HCT116 (cell line): ENCODE measurements at regions of chr6 and their contacts with region 1.

Region 1: GRCh38 chr6:47047479-47048407 is 5.6 kb upstream of the ADGRF1 start:
- DNase-seq: peak; percentile 89
- ATAC-seq: peak; percentile 80
- H3K4me3 ChIP-seq: peak overlapping the region in 1 of 2 experiments; percentile 9; a peak in 1 of 4 replicates
- H3K27ac ChIP-seq: no peak overlapping the region
- H3K4me1 ChIP-seq: peaks cover 29 to 59% of the 10 kb centered on the region in 2 experiments
- H3K27me3 ChIP-seq: no peaks in the 10 kb centered on the region
- CTCF ChIP-seq: peak; percentile 77 to 88 (median 84); a peak in 5 of 6 replicates
- POLR2A ChIP-seq: no peak
- RAD21 ChIP-seq: peak; percentile 95

Region 2: GRCh38 chr6:46338131-46338530 is 709.6 kb before region 1 on chr6:
- CTCF ChIA-PET with region 1: no interaction called
- POLR2A ChIA-PET with region 1: no interaction called
- RAD21 ChIA-PET with region 1: no interaction called
- intact Hi-C with region 1: no loop called
- DNase-seq: no peak
- ATAC-seq: no peak
- H3K4me3 ChIP-seq: no peak overlapping the region
- H3K27ac ChIP-seq: no peak overlapping the region
- H3K4me1 ChIP-seq: no peaks in the 10 kb centered on the region
- H3K27me3 ChIP-seq: no peaks in the 10 kb centered on the region
- CTCF ChIP-seq: no peak
- POLR2A ChIP-seq: no peak
- RAD21 ChIP-seq: no peak

Region 3: GRCh38 chr6:46419576-46420002 is 628.2 kb before region 1 on chr6:
- CTCF ChIA-PET with region 1: no interaction called
- POLR2A ChIA-PET with region 1: no interaction called
- RAD21 ChIA-PET with region 1: no interaction called
- intact Hi-C with region 1: loop called (anchors 5 kb)
- DNase-seq: peak; percentile 60
- ATAC-seq: peak; percentile 63; the same call in 1 of the 2 replicates
- H3K4me3 ChIP-seq: no peak overlapping the region
- H3K27ac ChIP-seq: no peak overlapping the region
- H3K4me1 ChIP-seq: no peaks in the 10 kb centered on the region
- H3K27me3 ChIP-seq: no peaks in the 10 kb centered on the region
- CTCF ChIP-seq: peak; percentile 67 to 88 (median 73)
- POLR2A ChIP-seq: no peak
- RAD21 ChIP-seq: peak; percentile 91

Region 4: DNA sequence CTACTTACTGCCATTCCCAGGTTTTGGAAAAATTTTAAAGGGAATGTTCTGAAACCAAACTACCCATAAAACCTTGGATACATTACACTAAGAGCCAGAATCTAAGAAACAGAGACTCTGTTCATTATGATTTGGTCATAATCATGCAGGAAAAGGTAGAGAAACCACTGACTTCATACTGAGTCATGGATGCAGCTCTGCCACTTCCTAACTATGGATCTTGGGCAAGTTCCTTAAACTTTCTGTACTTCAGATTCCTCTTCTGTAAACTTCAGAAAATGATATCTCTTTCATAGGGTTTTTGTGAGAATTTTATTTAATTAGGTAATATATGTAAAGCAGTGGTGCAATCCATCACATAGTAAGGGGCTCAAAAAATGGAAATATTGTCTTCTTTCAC is 332.6 kb before region 1 on chr6:
- CTCF ChIA-PET with region 1: no interaction called
- POLR2A ChIA-PET with region 1: no interaction called
- RAD21 ChIA-PET with region 1: no interaction called
- intact Hi-C with region 1: no loop called
- DNase-seq: no peak
- ATAC-seq: no peak
- H3K4me3 ChIP-seq: no peak overlapping the region
- H3K27ac ChIP-seq: no peak overlapping the region
- H3K4me1 ChIP-seq: peaks cover 2 to 30% of the 10 kb centered on the region in 2 experiments; a peak in 3 of 4 replicates
- H3K27me3 ChIP-seq: no peaks in the 10 kb centered on the region
- CTCF ChIP-seq: no peak
- POLR2A ChIP-seq: no peak
- RAD21 ChIP-seq: no peak

Region 5: DNA sequence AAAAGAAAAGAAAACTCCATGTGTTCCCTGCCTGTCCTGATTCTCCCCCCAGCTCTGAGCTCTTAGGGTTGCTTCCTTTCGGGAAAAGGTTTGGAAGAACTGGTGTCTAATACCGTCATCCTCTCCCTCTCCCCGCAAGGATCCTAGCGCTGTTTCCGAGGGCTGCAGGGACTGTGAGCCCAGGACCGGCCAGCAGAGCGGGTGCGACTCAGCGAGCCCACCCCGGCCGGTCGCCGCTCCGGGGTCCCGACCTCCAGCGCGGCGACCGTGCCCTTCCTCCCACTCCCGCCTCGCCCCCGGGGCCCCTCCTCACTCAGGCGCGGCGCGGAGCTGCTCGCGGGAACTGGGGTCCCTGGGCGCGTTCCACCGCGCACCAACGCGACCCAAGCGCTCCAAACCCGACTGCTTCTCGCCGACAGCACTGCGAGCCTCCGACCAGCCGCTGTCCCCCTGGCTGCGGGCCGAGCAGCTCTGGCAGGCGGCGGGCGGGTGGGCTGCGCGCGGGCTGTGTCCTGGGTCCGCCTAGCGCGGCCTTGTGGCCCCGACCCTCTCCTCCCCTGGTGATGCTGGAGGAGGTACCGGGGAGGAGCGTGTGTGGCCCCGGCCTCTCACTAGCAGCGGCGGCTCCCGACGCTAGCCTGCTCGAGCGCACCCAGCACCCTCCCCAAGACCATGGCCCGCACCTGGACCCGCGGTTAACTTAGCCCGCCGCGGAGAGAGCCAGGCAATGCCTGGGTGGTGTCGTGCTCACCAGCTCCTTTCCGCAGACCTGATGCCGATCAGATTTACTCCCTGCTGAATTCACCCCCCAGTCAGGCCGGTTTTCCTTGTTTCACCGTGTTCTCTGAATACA is 312.6 kb before region 1 on chr6 and contains the start of gene PLA2G7:
- CTCF ChIA-PET with region 1: no interaction called
- POLR2A ChIA-PET with region 1: no interaction called
- RAD21 ChIA-PET with region 1: interaction called in 1 of 2 experiments, 3 read pairs
- intact Hi-C with region 1: loop called (anchors 10 kb)
- DNase-seq: no peak
- ATAC-seq: peak; percentile 76
- H3K4me3 ChIP-seq: peak within 1 kb of the TSS; percentile 45 to 76
- H3K27ac ChIP-seq: peak within 1 kb of the TSS; percentile 43
- H3K4me1 ChIP-seq: peaks cover 16 to 32% of the 10 kb centered on the region in 2 experiments
- H3K27me3 ChIP-seq: no peaks in the 10 kb centered on the region
- CTCF ChIP-seq: no peak; a peak in 1 of 6 replicates
- POLR2A ChIP-seq: no peak
- RAD21 ChIP-seq: no peak
- total RNA-seq, gene PLA2G7: 2.8 TPM

Region 6: GRCh38 chr6:46848684-46849360 is 198.9 kb before region 1 on chr6:
- CTCF ChIA-PET with region 1: interaction called, 8 read pairs
- POLR2A ChIA-PET with region 1: no interaction called
- RAD21 ChIA-PET with region 1: no interaction called
- intact Hi-C with region 1: loop called (anchors 1 kb)
- DNase-seq: peak; percentile 53
- ATAC-seq: peak; percentile 99
- H3K4me3 ChIP-seq: peak overlapping the region in 1 of 2 experiments; percentile 13; a peak in 1 of 4 replicates
- H3K27ac ChIP-seq: no peak overlapping the region
- H3K4me1 ChIP-seq: peaks cover 0 to 18% of the 10 kb centered on the region in 2 experiments; a peak in 2 of 4 replicates
- H3K27me3 ChIP-seq: no peaks in the 10 kb centered on the region
- CTCF ChIP-seq: peak; percentile 88 to 94 (median 92)
- POLR2A ChIP-seq: no peak
- RAD21 ChIP-seq: peak; percentile 98

Region 7: GRCh38 chr6:47034919-47035318 is 12.8 kb before region 1 on chr6:
- CTCF ChIA-PET with region 1: interaction called, 3 read pairs
- POLR2A ChIA-PET with region 1: interaction called, 24 read pairs
- RAD21 ChIA-PET with region 1: interaction called in 1 of 2 experiments, 3 read pairs
- intact Hi-C with region 1: no loop called
- DNase-seq: peak; percentile 93
- ATAC-seq: peak; percentile 86
- H3K4me3 ChIP-seq: peak overlapping the region in 1 of 2 experiments; percentile 23; a peak in 2 of 4 replicates
- H3K27ac ChIP-seq: peak overlapping the region; percentile 63
- H3K4me1 ChIP-seq: peaks cover 38 to 64% of the 10 kb centered on the region in 2 experiments
- H3K27me3 ChIP-seq: no peaks in the 10 kb centered on the region
- CTCF ChIP-seq: no peak
- POLR2A ChIP-seq: no peak
- RAD21 ChIP-seq: peak; percentile 28